IMR-90 (cell line): ENCODE measurements at regions of chr2 and their contacts with region 1.

Region 1: DNA sequence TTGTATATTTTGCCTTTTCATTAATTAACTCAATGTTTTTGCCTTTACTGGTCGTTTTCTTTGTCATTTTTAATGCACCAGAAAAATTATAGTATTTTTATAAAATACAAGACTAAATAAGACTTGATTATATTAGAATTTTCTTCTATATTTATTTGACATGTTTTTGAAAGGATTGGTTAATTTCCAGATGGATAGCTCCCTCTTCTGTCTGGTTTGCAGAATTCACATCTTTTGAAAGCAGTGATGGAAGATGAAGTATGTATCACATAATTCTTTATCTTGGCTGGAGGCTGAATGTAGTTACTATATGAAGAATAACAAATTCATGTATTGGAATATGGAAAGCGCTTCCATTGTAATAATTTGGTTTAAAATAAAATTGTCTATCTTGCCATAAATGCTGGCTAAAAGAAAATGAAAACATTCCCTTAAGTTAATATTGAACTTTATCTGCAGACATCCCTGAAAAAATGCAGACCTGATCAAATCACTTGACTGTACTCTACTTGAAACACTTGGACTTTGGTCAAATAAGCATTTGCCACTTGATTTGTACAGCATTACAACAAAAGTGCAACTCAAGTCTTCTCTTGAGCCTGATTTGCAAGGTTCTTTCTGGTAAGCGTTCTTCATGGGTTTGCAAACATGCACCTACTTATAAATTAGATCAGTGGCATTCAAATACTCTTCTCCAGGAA is 86.3 kb upstream of the EFEMP1 start:
- DNase-seq: peak; percentile 70
- ATAC-seq: no peak
- H3K4me3 ChIP-seq: no peak overlapping the region
- H3K27ac ChIP-seq: no peak overlapping the region
- H3K4me1 ChIP-seq: peaks cover 3% of the 10 kb centered on the region
- H3K27me3 ChIP-seq: no peaks in the 10 kb centered on the region
- CTCF ChIP-seq: peak; percentile 84
- POLR2A ChIP-seq: no peak
- RAD21 ChIP-seq: peak; percentile 85

Region 2: GRCh38 chr2:55761526-55761925 is 248.4 kb before region 1 on chr2:
- CTCF ChIA-PET with region 1: no interaction called
- POLR2A ChIA-PET with region 1: no interaction called
- dilution Hi-C with region 1: no loop called
- in situ Hi-C with region 1: loop called (anchors 10 kb)
- intact Hi-C with region 1: no loop called
- DNase-seq: peak; percentile 23
- ATAC-seq: peak; percentile 62
- H3K4me3 ChIP-seq: no peak overlapping the region
- H3K27ac ChIP-seq: no peak overlapping the region; the same call in 1 of the 2 replicates
- H3K4me1 ChIP-seq: peaks cover 2% of the 10 kb centered on the region; the same call in 1 of the 2 replicates
- H3K27me3 ChIP-seq: no peaks in the 10 kb centered on the region
- CTCF ChIP-seq: no peak
- POLR2A ChIP-seq: no peak
- RAD21 ChIP-seq: no peak

Region 3: DNA sequence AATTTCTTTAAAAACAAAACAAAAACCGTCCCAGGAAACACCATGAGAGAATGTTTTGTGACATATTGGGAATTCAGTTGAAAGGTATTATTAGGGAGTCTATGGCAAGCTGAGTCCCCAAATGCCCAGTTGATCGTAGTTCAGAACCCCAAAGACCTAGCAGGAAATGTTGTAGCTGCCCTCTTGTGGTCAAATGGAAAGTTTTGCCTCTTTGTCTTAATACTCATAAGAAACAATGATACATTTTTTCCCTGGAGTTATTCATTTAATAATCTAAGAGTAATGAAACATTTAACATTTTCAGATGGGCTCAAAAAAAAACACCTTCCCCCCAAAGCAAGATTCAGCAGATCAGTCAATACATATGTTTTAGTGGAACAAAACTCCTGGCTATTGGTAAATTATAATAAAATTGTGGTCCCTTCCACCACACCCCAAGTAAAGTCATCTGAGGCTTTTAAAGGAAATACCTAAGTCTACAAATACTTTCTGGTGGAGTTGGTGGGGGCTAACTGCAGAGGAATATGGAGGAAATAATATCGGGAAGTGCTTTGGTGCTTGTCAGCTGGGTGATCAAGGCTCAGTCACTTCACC is 48.5 kb before region 1 on chr2:
- CTCF ChIA-PET with region 1: no interaction called
- POLR2A ChIA-PET with region 1: no interaction called
- dilution Hi-C with region 1: no loop called
- in situ Hi-C with region 1: no loop called
- intact Hi-C with region 1: loop called (anchors 1 kb)
- DNase-seq: peak; percentile 66
- ATAC-seq: peak; percentile 73
- H3K4me3 ChIP-seq: no peak overlapping the region
- H3K27ac ChIP-seq: no peak overlapping the region
- H3K4me1 ChIP-seq: peaks cover 8% of the 10 kb centered on the region
- H3K27me3 ChIP-seq: no peaks in the 10 kb centered on the region
- CTCF ChIP-seq: peak; percentile 71
- POLR2A ChIP-seq: no peak
- RAD21 ChIP-seq: peak; percentile 74

Region 4: GRCh38 chr2:56068746-56069145 is 58.8 kb after region 1 on chr2:
- CTCF ChIA-PET with region 1: no interaction called
- POLR2A ChIA-PET with region 1: no interaction called
- dilution Hi-C with region 1: no loop called
- in situ Hi-C with region 1: no loop called
- intact Hi-C with region 1: no loop called
- DNase-seq: no peak
- ATAC-seq: no peak
- H3K4me3 ChIP-seq: no peak overlapping the region
- H3K27ac ChIP-seq: no peak overlapping the region
- H3K4me1 ChIP-seq: no peaks in the 10 kb centered on the region
- H3K27me3 ChIP-seq: 0 out of 2 replicates have a peak, but pooled peaks cover 1% of the 10 kb centered on the region
- CTCF ChIP-seq: no peak
- POLR2A ChIP-seq: no peak
- RAD21 ChIP-seq: no peak

Region 5: DNA sequence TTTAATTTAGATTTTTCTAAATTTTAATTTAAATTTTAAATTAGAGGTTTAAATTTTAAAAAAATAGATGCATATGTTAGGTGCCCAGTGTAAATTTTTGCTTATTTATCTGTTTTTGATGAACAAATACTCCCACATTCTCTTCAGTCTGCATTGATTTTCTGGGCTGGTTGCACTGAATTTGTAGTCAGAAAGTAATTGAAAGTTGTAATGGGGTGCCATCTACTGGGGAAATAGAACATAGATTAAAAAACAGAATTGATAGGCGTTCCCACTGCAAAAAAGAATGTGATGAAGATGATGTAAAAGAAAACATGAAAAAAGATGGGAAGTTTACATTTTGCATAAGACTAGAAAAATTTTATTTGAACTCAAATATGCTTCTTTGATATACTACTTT is 122.2 kb after region 1 on chr2:
- CTCF ChIA-PET with region 1: no interaction called
- POLR2A ChIA-PET with region 1: no interaction called
- dilution Hi-C with region 1: no loop called
- in situ Hi-C with region 1: no loop called
- intact Hi-C with region 1: loop called (anchors 5 kb)
- DNase-seq: peak; percentile 47
- ATAC-seq: peak; percentile 51; the same call in 1 of the 2 replicates
- H3K4me3 ChIP-seq: no peak overlapping the region
- H3K27ac ChIP-seq: no peak overlapping the region
- H3K4me1 ChIP-seq: no peaks in the 10 kb centered on the region
- H3K27me3 ChIP-seq: 0 out of 2 replicates have a peak, but pooled peaks cover 2% of the 10 kb centered on the region
- CTCF ChIP-seq: peak; percentile 69
- POLR2A ChIP-seq: no peak
- RAD21 ChIP-seq: peak; percentile 66

Region 6: DNA sequence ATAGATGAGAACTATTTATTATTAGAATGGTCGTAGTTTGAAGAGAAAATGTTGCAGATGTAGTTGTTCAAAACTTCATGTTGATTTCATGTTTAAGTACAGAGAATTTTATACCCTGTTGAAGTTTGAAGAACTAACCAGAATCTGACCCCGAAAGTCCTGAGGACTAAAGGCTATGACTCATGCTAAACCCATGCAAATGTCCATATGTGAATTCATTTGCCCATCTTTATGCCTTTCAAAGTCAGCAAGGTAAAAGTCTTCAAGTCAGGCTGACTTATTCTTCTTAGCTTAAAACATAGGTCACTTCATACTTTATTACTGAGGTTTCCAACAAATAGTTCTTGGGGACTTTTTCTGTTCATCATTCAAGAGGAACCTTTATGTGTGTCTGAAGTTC is 359.4 kb after region 1 on chr2:
- CTCF ChIA-PET with region 1: no interaction called
- POLR2A ChIA-PET with region 1: no interaction called
- dilution Hi-C with region 1: no loop called
- in situ Hi-C with region 1: no loop called
- intact Hi-C with region 1: no loop called
- DNase-seq: no peak
- ATAC-seq: no peak
- H3K4me3 ChIP-seq: no peak overlapping the region
- H3K27ac ChIP-seq: no peak overlapping the region
- H3K4me1 ChIP-seq: no peaks in the 10 kb centered on the region
- H3K27me3 ChIP-seq: no peaks in the 10 kb centered on the region
- CTCF ChIP-seq: no peak
- POLR2A ChIP-seq: no peak
- RAD21 ChIP-seq: no peak